Calu3 (cell line): ENCODE measurements at regions of chr1 and their contacts with region 1.

Region 1: GRCh38 chr1:16946646-16947045 is 24.9 kb downstream of the CROCC start:
- DNase-seq: no peak
- H3K4me3 Mint-ChIP-seq: no peak overlapping the region
- H3K27ac Mint-ChIP-seq: no peak overlapping the region
- H3K4me1 Mint-ChIP-seq: no peaks in the 10 kb centered on the region
- H3K27me3 Mint-ChIP-seq: no peaks in the 10 kb centered on the region
- CTCF ChIP-seq: no peak

Region 2: GRCh38 chr1:16960560-16961296 is 14.1 kb after region 1 on chr1:
- CTCF ChIA-PET with region 1: interaction called, 18 read pairs
- intact Hi-C with region 1: no loop called
- DNase-seq: peak; percentile 91
- H3K4me3 Mint-ChIP-seq: peak overlapping the region; percentile 56
- H3K27ac Mint-ChIP-seq: no peak overlapping the region
- H3K4me1 Mint-ChIP-seq: no peaks in the 10 kb centered on the region
- H3K27me3 Mint-ChIP-seq: no peaks in the 10 kb centered on the region
- CTCF ChIP-seq: peak; percentile 52

Region 3: GRCh38 chr1:17023102-17023501 is 76.5 kb after region 1 on chr1:
- CTCF ChIA-PET with region 1: no interaction called
- intact Hi-C with region 1: no loop called
- DNase-seq: no peak
- H3K4me3 Mint-ChIP-seq: no peak overlapping the region
- H3K27ac Mint-ChIP-seq: no peak overlapping the region
- H3K4me1 Mint-ChIP-seq: no peaks in the 10 kb centered on the region
- H3K27me3 Mint-ChIP-seq: no peaks in the 10 kb centered on the region
- CTCF ChIP-seq: no peak

Region 4: GRCh38 chr1:17045634-17046333 is 99.1 kb after region 1 on chr1:
- CTCF ChIA-PET with region 1: interaction called, 4 read pairs
- intact Hi-C with region 1: loop called (anchors 2 kb)
- DNase-seq: no peak
- H3K4me3 Mint-ChIP-seq: no peak overlapping the region
- H3K27ac Mint-ChIP-seq: no peak overlapping the region
- H3K4me1 Mint-ChIP-seq: no peaks in the 10 kb centered on the region
- H3K27me3 Mint-ChIP-seq: no peaks in the 10 kb centered on the region
- CTCF ChIP-seq: peak; percentile 28